B cell (primary cell): ENCODE measurements at regions of chr14 and their contacts with region 1.

Region 1: DNA sequence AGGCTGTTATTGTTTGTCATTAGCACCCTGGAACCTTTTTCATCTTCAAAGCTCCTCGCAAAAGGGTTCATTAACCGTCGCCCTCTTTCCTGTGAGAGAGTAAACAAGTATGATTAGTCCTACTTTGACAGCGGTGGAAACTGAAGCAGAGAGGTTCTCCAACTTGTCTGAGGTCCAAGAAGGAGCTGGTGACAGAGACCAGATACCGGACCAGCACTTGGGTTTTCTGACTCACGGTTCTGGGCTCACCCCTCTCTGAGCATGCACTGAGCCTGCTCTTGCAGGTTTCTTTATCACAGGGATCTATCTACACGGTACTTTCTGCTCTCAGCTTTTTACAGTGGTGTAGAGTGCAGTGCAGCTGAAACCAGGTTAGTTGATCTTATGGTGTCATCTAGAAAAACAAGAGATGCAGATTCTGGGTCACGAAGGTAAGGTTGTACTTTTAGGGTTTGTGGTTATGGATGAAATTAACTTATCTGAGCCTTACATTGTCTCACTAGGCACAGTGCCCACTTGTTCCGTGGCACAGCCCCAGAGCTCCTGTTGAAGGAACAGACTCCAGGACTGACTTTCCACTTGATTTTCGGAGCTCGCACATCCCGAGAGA is 62.1 kb downstream of the PPP2R5C start:
- DNase-seq: peak; percentile 55
- ATAC-seq: peak; percentile 28
- H3K4me3 ChIP-seq: peak overlapping the region in 4 of 5 experiments; percentile 20 to 58 (median 48)
- H3K4me3 Mint-ChIP-seq: peak overlapping the region; percentile 92
- H3K27ac ChIP-seq: peak overlapping the region; percentile 99 to 100
- H3K27ac Mint-ChIP-seq: peak overlapping the region; percentile 99
- H3K4me1 ChIP-seq: peaks cover 80 to 82% of the 10 kb centered on the region in 2 donors
- H3K4me1 Mint-ChIP-seq: peaks cover 88% of the 10 kb centered on the region
- H3K27me3 ChIP-seq: no peaks in the 10 kb centered on the region
- H3K27me3 Mint-ChIP-seq: no peaks in the 10 kb centered on the region
- CTCF ChIP-seq: no peak

Region 2: GRCh38 chr14:101761032-101761880 is 62.4 kb before region 1 on chr14 and contains the start of gene PPP2R5C:
- CTCF ChIA-PET with region 1: interaction called, 4 read pairs
- POLR2A ChIA-PET with region 1: interaction called, 3 read pairs
- intact Hi-C with region 1: loop called (anchors 1 kb)
- DNase-seq: peak; percentile 93
- ATAC-seq: peak; percentile 63
- H3K4me3 ChIP-seq: peak within 1 kb of the TSS; percentile 73 to 96 (median 87)
- H3K4me3 Mint-ChIP-seq: peak within 1 kb of the TSS; percentile 94
- H3K27ac ChIP-seq: peak within 1 kb of the TSS; percentile 66 to 78
- H3K27ac Mint-ChIP-seq: peak within 1 kb of the TSS; percentile 92
- H3K4me1 ChIP-seq: peaks cover 11 to 12% of the 10 kb centered on the region in 2 donors
- H3K4me1 Mint-ChIP-seq: peaks cover 14% of the 10 kb centered on the region
- H3K27me3 ChIP-seq: no peaks in the 10 kb centered on the region
- H3K27me3 Mint-ChIP-seq: no peaks in the 10 kb centered on the region
- CTCF ChIP-seq: no peak
- total RNA-seq, gene PPP2R5C: 330 and 337 TPM in 2 replicates

Region 3: GRCh38 chr14:101774006-101774795 is 49.4 kb before region 1 on chr14:
- CTCF ChIA-PET with region 1: interaction called, 31 read pairs
- POLR2A ChIA-PET with region 1: interaction called, 7 read pairs
- intact Hi-C with region 1: loop called (anchors 2 kb)
- DNase-seq: peak; percentile 70
- ATAC-seq: peak; percentile 66
- H3K4me3 ChIP-seq: no peak overlapping the region
- H3K4me3 Mint-ChIP-seq: peak overlapping the region; percentile 36
- H3K27ac ChIP-seq: peak overlapping the region; percentile 54 to 63
- H3K27ac Mint-ChIP-seq: peak overlapping the region; percentile 93
- H3K4me1 ChIP-seq: peaks cover 40 to 55% of the 10 kb centered on the region in 2 donors
- H3K4me1 Mint-ChIP-seq: peaks cover 57% of the 10 kb centered on the region
- H3K27me3 ChIP-seq: no peaks in the 10 kb centered on the region
- H3K27me3 Mint-ChIP-seq: no peaks in the 10 kb centered on the region
- CTCF ChIP-seq: no peak

Region 4: DNA sequence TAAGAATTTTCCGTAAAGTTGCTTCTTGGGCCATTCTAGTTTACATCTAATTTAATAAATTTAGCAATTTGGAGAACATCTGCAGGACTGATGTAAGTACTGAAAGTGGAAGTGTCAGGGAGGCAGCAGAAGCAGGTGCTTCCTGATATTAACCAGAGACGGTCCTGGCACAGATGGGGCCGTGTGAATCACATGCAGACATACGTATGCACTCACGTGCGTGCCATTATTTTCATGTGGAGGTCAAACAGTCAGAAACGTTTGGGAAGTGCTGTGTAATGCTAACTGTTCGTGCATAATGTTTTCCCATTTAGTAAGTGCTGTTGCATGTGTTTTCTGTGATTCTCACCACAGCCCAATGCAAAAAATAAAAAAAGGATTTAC is 52.9 kb after region 1 on chr14:
- CTCF ChIA-PET with region 1: no interaction called
- POLR2A ChIA-PET with region 1: no interaction called
- intact Hi-C with region 1: loop called (anchors 1 kb)
- DNase-seq: peak; percentile 96
- ATAC-seq: peak; percentile 89
- H3K4me3 ChIP-seq: peak overlapping the region in 4 of 5 experiments; percentile 8 to 57 (median 29)
- H3K4me3 Mint-ChIP-seq: peak overlapping the region; percentile 71
- H3K27ac ChIP-seq: peak overlapping the region; percentile 94 to 96
- H3K27ac Mint-ChIP-seq: peak overlapping the region; percentile 72
- H3K4me1 ChIP-seq: peaks cover 52 to 58% of the 10 kb centered on the region in 2 donors
- H3K4me1 Mint-ChIP-seq: peaks cover 79% of the 10 kb centered on the region
- H3K27me3 ChIP-seq: no peaks in the 10 kb centered on the region
- H3K27me3 Mint-ChIP-seq: no peaks in the 10 kb centered on the region
- CTCF ChIP-seq: no peak